ENCODE measurements at regions of chr1 and their contacts with region 1.

Region 1: GRCh38 chr1:10022656-10023055 is 10.1 kb upstream of the UBE4B start:
- DNase-seq: no peak
- H3K4me3 ChIP-seq: no peak overlapping the region
- H3K27ac ChIP-seq: no peak overlapping the region
- H3K4me1 ChIP-seq: peaks cover 4% of the 10 kb centered on the region
- H3K27me3 ChIP-seq: no peaks in the 10 kb centered on the region
- CTCF ChIP-seq: no peak

Region 2: GRCh38 chr1:9573723-9574122 is 448.9 kb before region 1 on chr1:
- dilution Hi-C with region 1: no loop called
- DNase-seq: no peak
- H3K4me3 ChIP-seq: no peak overlapping the region
- H3K27ac ChIP-seq: no peak overlapping the region
- H3K4me1 ChIP-seq: no peaks in the 10 kb centered on the region
- H3K27me3 ChIP-seq: no peaks in the 10 kb centered on the region
- CTCF ChIP-seq: peak in 1 of 3 experiments; percentile 27

Region 3: DNA sequence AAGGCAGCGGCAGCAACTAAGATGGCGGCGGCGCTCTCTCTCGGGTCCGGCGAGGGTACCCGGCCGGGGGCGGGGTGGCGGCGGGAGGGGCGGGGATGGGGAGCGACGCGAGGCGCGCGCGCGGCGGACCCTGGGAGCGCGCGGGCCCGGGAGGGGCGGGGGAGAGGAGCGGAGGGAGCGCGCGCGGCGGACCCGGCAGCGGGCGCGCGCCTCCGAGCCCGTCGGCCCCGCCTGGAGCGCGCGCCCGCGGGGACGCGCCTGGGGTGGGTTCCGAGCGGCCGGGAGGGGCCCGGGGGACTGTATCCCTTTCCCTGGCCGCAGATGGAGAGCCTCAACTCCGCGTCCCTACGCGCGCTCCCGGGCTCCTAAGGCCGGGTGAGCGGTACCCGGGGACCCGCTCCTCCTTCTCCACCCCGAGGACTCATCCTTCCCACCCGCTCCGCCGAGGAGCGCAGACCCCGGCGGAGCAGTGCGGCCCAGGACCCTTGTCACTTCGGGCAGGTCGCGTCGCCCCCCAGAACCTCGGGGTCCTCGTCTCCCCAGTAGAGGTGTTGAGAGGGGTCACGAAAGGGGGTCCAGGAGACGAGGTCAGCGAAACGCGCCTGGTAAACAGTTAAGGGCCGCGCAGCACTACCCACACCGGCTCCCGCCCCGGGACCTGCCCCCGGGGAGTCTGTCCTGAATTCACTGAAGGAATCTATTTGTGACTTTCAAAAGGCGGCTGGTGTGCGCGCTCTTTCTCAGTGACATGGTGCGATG is 198.5 kb before region 1 on chr1 and contains the start of gene CLSTN1:
- dilution Hi-C with region 1: no loop called
- DNase-seq: no peak
- H3K4me3 ChIP-seq: peak within 1 kb of the TSS; percentile 96 to 100 (median 97)
- H3K27ac ChIP-seq: peak within 1 kb of the TSS; percentile 80
- H3K4me1 ChIP-seq: peaks cover 53% of the 10 kb centered on the region
- H3K27me3 ChIP-seq: no peaks in the 10 kb centered on the region
- CTCF ChIP-seq: no peak
- polyA plus RNA-seq, gene CLSTN1: 79.1 to 263 TPM (median 90.3 TPM) in 3 replicates

Region 4: GRCh38 chr1:9960706-9961562 is 61.7 kb before region 1 on chr1:
- dilution Hi-C with region 1: loop called (anchors 10 kb)
- DNase-seq: no peak
- H3K4me3 ChIP-seq: no peak overlapping the region
- H3K27ac ChIP-seq: no peak overlapping the region
- H3K4me1 ChIP-seq: no peaks in the 10 kb centered on the region
- H3K27me3 ChIP-seq: no peaks in the 10 kb centered on the region
- CTCF ChIP-seq: no peak

Measured in keratinocyte (primary cell).